GM10248 (cell line): ENCODE measurements at regions of chr1 and their contacts with region 1.

Region 1: GRCh38 chr1:157626099-157626498 is 28.2 kb upstream of the FCRL4 start:
- DNase-seq: peak; percentile 60
- CTCF ChIP-seq: peak; percentile 71

Region 2: DNA sequence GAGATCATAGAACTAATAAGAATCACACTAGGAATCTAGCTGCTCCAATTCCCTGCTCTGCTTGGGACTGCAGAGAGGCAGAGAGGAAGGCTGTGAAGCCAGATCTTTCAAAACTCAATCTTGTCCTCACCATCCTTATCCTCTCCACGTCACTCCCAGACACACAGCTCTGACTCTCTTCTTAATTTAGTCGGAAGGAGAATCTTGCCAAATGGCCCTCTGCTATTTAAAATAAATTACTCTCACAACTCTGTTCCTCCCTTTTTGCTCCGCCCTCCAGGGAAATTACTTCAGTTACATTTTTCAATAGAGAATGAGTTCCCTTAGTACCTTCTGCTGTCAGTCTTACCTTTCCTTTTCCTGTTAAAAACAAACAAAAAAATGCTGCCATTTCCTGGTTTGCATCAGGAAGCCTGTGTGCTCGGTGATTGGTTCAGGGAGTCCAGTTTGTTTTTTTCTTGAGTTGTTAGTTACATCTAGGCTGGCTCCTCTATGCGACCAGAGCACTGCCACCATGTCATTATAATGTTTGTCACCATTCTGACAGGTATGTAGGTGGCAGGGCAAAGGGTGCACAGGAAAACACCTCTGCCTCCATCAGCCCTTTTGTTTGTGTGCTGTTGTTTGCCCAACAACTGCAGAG is 153.9 kb before region 1 on chr1:
- CTCF ChIA-PET with region 1: no interaction called
- POLR2A ChIA-PET with region 1: no interaction called
- DNase-seq: no peak
- CTCF ChIP-seq: no peak

Region 3: GRCh38 chr1:157639800-157640199 is 13.7 kb after region 1 on chr1:
- CTCF ChIA-PET with region 1: interaction called, 12 read pairs
- POLR2A ChIA-PET with region 1: no interaction called
- DNase-seq: no peak
- CTCF ChIP-seq: no peak

Region 4: DNA sequence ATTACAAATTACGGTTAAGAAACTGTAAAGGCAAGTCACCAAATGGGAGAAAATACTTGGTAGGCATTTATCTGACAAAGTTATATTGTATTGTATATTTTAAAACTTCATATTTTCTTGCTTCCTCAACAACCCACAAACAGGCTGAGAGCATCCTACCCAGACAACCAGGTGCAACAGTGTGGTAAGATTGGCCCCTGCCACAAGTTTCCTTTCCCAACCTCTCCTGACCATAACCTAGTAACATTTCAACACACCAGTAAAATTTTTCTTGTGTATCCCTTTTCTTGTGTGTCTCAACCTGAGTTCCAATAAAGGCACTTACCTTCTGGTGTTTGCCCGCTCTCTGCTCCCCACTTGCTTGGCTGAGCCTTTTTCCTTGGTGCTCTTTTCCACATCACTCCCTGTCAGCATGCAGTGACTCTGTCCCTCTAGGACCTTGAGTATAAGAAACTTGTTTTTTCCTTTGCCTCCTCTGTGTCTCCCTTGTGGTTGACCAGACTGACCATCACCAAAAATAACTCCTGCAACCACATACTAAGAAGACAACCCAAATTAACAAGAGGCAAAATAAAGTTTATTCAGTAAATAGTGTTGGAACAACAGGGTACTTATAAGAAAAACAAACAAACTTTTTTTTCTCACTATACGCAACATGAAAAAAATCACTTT is 33.6 kb after region 1 on chr1:
- CTCF ChIA-PET with region 1: no interaction called
- POLR2A ChIA-PET with region 1: no interaction called
- DNase-seq: no peak
- CTCF ChIP-seq: no peak